Right ventricle myocardium inferior (tissue), 1 donor: ENCODE measurements at regions of chr6 and their contacts with region 1.

Region 1: GRCh38 chr6:141562851-141563763 is 569.6 kb upstream of the GJE1 start:
- DNase-seq: peak; percentile 69
- ATAC-seq: peak; percentile 93

Region 2: GRCh38 chr6:141313986-141314385 is 249.1 kb before region 1 on chr6:
- intact Hi-C with region 1: loop called (anchors 5 kb)
- DNase-seq: no peak
- ATAC-seq: no peak

Region 3: GRCh38 chr6:141483598-141484061 is 79.5 kb before region 1 on chr6:
- intact Hi-C with region 1: loop called (anchors 5 kb)
- DNase-seq: no peak
- ATAC-seq: peak; percentile 86

Region 4: DNA sequence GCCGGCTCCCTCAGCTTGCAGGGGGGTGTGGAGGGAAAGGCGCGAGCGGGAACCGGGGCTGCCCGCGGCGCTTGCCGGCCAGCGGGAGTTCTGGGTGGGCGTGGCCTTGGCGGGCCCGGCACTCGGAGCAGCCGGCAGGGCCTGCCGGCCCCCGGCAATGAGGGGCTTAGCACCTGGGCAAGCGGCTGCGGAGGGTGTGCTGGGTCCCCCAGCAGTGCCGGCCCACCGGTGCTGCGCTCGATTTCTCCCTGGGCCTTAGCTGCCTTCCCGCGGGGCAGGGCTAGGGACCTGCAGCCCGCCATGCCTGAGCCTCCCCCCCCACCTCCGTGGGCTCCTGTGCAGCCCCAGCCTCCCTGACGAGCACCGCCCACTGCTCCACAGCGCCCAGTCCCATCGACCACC is 55.1 kb after region 1 on chr6:
- intact Hi-C with region 1: no loop called
- DNase-seq: peak; percentile 13
- ATAC-seq: no peak

Region 5: DNA sequence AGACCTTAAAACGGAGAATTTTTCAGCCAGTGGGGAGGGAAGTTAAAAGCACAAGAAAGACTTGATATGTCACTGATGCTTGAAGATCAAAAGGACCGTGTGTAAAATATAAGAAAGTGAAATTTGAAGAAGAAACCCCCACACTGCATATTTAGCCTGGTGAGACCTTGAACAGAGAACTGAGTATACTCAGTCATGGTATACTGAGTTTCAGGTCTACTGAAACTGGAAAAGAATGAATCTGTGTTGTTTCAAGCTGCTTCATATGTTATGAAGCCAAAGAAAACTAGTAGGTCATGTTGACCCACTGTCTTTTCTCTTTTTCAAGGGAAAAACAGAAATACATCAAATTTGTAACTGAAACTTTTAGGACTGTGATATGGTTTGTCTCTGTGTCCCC is 125.8 kb after region 1 on chr6:
- intact Hi-C with region 1: no loop called
- DNase-seq: no peak
- ATAC-seq: no peak

Region 6: DNA sequence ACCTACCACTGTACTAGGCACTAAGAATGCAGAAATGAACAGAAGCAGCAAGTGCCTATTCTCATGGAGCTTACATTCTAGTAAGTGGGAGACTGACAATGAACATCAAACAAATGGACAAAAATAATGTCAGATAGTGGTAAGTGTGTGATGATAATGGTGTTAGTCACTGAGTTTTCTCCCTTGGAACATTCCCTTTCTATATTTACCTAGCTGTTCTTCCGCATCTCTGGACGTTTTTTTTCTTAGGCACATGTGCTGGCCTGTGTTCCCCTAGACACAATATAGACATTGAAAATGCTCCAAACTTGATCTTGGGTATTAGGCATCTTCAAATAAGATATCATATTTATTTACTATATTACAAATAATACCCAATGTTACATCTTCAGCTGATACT is 351.5 kb after region 1 on chr6:
- intact Hi-C with region 1: no loop called
- DNase-seq: no peak
- ATAC-seq: no peak